ENCODE measurements at regions of chr7 and their contacts with region 1.

Region 1: DNA sequence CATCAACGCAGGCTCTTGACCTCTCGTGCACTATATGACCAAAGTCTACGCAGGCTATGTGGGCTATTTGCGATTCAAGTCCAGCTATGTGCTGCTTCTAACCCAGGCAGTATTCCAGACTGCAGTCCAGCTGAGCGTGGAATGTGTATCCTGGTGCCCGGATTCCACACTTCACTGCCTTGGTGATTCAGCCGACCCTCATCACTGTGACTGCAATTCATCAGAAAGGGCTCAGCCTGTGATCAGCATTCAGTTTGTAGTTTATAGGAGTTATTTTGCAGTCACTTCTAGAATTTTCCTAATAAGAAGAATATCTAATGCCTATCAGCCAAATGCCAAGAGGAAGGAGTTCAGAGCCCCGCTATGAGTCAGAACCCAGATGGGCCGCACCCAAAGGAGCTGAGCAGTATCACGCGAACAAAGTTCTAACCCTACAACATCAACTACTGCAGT is 119.8 kb upstream of the LANCL2 start:
- DNase-seq: no peak
- ATAC-seq: no peak
- H3K4me3 ChIP-seq: no peak overlapping the region
- H3K27ac ChIP-seq: no peak overlapping the region
- H3K4me1 ChIP-seq: no peaks in the 10 kb centered on the region
- H3K27me3 ChIP-seq: no peaks in the 10 kb centered on the region

Region 2: GRCh38 chr7:55192718-55193117 is 52.6 kb before region 1 on chr7:
- intact Hi-C with region 1: loop called in 1 of 2 experiments (anchors 10 kb)
- DNase-seq: no peak
- ATAC-seq: no peak
- H3K4me3 ChIP-seq: no peak overlapping the region
- H3K27ac ChIP-seq: no peak overlapping the region
- H3K4me1 ChIP-seq: no peaks in the 10 kb centered on the region
- H3K27me3 ChIP-seq: no peaks in the 10 kb centered on the region

Region 3: GRCh38 chr7:55309040-55309991 is 64.0 kb after region 1 on chr7:
- intact Hi-C with region 1: no loop called
- DNase-seq: peak in 1 of 2 donors; percentile 50
- ATAC-seq: no peak
- H3K4me3 ChIP-seq: no peak overlapping the region
- H3K27ac ChIP-seq: no peak overlapping the region
- H3K4me1 ChIP-seq: no peaks in the 10 kb centered on the region
- H3K27me3 ChIP-seq: no peaks in the 10 kb centered on the region

Region 4: GRCh38 chr7:56033671-56034432 is 788.6 kb after region 1 on chr7:
- intact Hi-C with region 1: no loop called
- DNase-seq: peak; percentile 59 to 78
- ATAC-seq: peak; percentile 77
- H3K4me3 ChIP-seq: peak overlapping the region; percentile 35 to 57
- H3K27ac ChIP-seq: no peak overlapping the region
- H3K4me1 ChIP-seq: no peaks in the 10 kb centered on the region
- H3K27me3 ChIP-seq: no peaks in the 10 kb centered on the region